GM12878 (cell line): ENCODE measurements at regions of chr3 and their contacts with region 1.

Region 1: DNA sequence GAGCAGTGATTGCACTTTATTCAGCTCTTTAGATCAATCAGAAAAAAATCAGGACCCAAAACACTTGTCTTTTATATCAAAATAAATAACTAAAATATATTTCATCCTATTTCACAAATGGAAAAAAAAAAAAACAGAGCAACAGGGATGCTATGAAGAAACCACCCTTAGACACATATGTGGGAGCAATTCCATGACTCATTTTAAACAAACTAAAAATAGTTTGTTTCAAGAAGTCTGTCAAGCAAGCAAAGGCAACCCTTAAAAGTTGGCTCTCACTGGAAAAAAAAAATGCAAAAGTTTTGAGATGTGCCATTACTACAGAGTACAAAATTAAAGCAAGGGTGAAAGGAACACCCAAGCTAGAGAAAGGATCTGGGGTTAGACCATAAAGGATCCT is 5.7 kb downstream of the ATP13A3 start:
- DNase-seq: no peak
- ATAC-seq: no peak
- H3K4me3 ChIP-seq: peak overlapping the region; percentile 17; the same call in 1 of the 2 replicates
- H3K27ac ChIP-seq: no peak overlapping the region
- H3K4me1 ChIP-seq: peaks cover 5% of the 10 kb centered on the region; the same call in 1 of the 2 replicates
- H3K27me3 ChIP-seq: no peaks in the 10 kb centered on the region
- CTCF ChIP-seq: no peak
- EP300 ChIP-seq: no peak
- POLR2A ChIP-seq: no peak
- RAD21 ChIP-seq: no peak

Region 2: DNA sequence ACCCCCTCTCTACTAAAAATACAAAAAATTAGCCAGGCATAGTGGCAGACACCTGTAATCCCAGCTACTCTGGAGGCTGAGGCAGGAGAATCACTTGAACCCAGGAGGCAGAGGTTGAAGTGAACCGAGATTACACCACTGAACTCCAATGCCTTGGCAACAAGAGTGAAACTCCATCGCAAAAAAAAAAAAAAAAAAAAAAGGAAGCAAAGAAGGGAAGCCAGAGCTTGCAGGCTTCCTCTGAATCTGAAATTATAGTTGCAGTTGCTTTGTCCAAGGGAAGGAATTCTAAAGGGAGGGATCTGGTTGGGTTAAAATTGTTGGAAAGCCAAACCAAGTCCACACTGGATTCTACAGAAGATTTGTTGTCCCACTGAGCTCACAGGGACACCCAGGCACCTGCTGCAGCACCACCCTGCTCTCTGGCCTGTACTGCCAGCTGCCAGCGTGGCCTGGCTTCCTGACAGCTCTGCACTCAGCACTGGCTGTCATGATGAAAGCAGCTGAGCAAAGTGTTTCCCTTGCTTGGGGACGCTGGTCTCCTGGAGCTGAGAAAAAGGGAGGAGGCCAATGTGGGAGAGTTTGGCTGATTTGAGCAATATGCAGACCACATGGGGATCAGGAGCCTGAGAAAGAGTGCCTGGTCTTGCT is 434.0 kb before region 1 on chr3:
- CTCF ChIA-PET with region 1: no interaction called
- POLR2A ChIA-PET with region 1: no interaction called
- RAD21 ChIA-PET with region 1: no interaction called
- SMC1A ChIA-PET with region 1: no interaction called
- in situ Hi-C with region 1: no loop called
- intact Hi-C with region 1: no loop called
- DNase-seq: no peak
- ATAC-seq: peak; percentile 50
- H3K4me3 ChIP-seq: no peak overlapping the region
- H3K27ac ChIP-seq: no peak overlapping the region
- H3K4me1 ChIP-seq: peaks cover 9% of the 10 kb centered on the region; the same call in 1 of the 2 replicates
- H3K27me3 ChIP-seq: no peaks in the 10 kb centered on the region
- CTCF ChIP-seq: no peak
- EP300 ChIP-seq: no peak
- POLR2A ChIP-seq: no peak
- RAD21 ChIP-seq: no peak

Region 3: GRCh38 chr3:194134757-194135528 is 346.2 kb before region 1 on chr3:
- CTCF ChIA-PET with region 1: no interaction called
- POLR2A ChIA-PET with region 1: no interaction called
- RAD21 ChIA-PET with region 1: no interaction called
- SMC1A ChIA-PET with region 1: no interaction called
- in situ Hi-C with region 1: no loop called
- intact Hi-C with region 1: no loop called
- DNase-seq: peak; percentile 55
- ATAC-seq: peak; percentile 64
- H3K4me3 ChIP-seq: peak overlapping the region; percentile 61
- H3K27ac ChIP-seq: peak overlapping the region; percentile 31; the same call in 1 of the 2 replicates
- H3K4me1 ChIP-seq: peaks cover 27% of the 10 kb centered on the region
- H3K27me3 ChIP-seq: peaks cover 1 to 3% of the 10 kb centered on the region in 2 experiments; a peak in 3 of 4 replicates
- CTCF ChIP-seq: no peak
- EP300 ChIP-seq: peak in 1 of 2 experiments; percentile 55; a peak in 1 of 4 replicates
- POLR2A ChIP-seq: 0 out of 2 replicates have a peak, but pooled peaks have one; percentile 16
- RAD21 ChIP-seq: no peak

Region 4: GRCh38 chr3:194497821-194498598 is 16.9 kb after region 1 on chr3:
- CTCF ChIA-PET with region 1: interaction called, 4 read pairs
- POLR2A ChIA-PET with region 1: interaction called, 8 read pairs
- RAD21 ChIA-PET with region 1: interaction called, 18 read pairs
- SMC1A ChIA-PET with region 1: interaction called, 14 read pairs
- in situ Hi-C with region 1: no loop called
- intact Hi-C with region 1: no loop called
- DNase-seq: no peak
- ATAC-seq: peak; percentile 75
- H3K4me3 ChIP-seq: no peak overlapping the region
- H3K27ac ChIP-seq: no peak overlapping the region
- H3K4me1 ChIP-seq: peaks cover 13% of the 10 kb centered on the region
- H3K27me3 ChIP-seq: no peaks in the 10 kb centered on the region
- CTCF ChIP-seq: no peak
- EP300 ChIP-seq: no peak
- POLR2A ChIP-seq: no peak
- RAD21 ChIP-seq: no peak

Region 5: GRCh38 chr3:194583604-194584318 is 102.7 kb after region 1 on chr3:
- CTCF ChIA-PET with region 1: interaction called, 237 read pairs
- POLR2A ChIA-PET with region 1: interaction called, 5 read pairs
- RAD21 ChIA-PET with region 1: no interaction called
- SMC1A ChIA-PET with region 1: interaction called, 10 read pairs
- in situ Hi-C with region 1: loop called (anchors 5 kb)
- intact Hi-C with region 1: no loop called
- DNase-seq: peak; percentile 53
- ATAC-seq: peak; percentile 98
- H3K4me3 ChIP-seq: peak overlapping the region; percentile 77
- H3K27ac ChIP-seq: peak overlapping the region; percentile 96
- H3K4me1 ChIP-seq: no peaks in the 10 kb centered on the region
- H3K27me3 ChIP-seq: no peaks in the 10 kb centered on the region
- CTCF ChIP-seq: no peak
- EP300 ChIP-seq: 0 out of 4 replicates have a peak, but pooled peaks of 1 of the 2 experiments have one; percentile 32
- POLR2A ChIP-seq: peak; percentile 100
- RAD21 ChIP-seq: no peak